ENCODE measurements at regions of chr2 and their contacts with region 1.

Region 1: DNA sequence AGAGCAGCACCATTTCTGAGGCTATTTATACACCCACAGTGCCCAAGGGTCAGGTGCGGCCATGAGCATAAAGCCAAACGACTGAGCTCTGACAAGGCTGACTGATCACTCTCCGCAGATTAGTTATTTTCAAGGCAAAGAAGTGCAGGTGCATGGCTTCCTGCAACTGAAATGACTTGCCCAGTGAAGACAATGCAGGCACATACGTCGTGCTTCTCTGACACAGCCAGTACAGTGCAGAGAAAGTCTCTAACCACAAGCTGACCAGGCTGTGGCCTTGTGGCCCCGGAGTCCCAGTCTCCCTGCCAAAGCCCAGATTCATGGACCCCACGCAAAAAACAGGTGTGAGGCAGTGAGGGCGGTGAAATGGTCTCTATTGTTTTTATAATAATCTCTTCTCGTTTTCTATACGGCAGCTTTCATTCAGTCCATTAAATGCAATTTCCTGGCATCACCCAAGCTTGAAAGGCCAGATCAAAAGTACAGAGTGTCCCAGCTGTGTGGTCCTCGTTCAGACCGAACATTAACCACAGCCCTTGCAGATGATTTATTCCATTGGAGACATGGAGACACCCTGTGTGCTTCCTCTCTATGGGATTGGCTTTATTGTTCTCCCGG is 447.0 kb upstream of the ID2 start:
- DNase-seq: peak; percentile 90
- ATAC-seq: peak; percentile 88
- H3K4me3 ChIP-seq: peak overlapping the region; percentile 26; the same call in 1 of the 2 replicates
- H3K27ac ChIP-seq: peak overlapping the region; percentile 41
- H3K4me1 ChIP-seq: peaks cover 39% of the 10 kb centered on the region
- H3K27me3 ChIP-seq: no peaks in the 10 kb centered on the region
- CTCF ChIP-seq: no peak
- EP300 ChIP-seq: peak; percentile 78 to 84
- POLR2A ChIP-seq: no peak
- RAD21 ChIP-seq: no peak

Region 2: GRCh38 chr2:8004250-8004681 is 230.6 kb before region 1 on chr2:
- CTCF ChIA-PET with region 1: interaction called, 5 read pairs
- POLR2A ChIA-PET with region 1: no interaction called
- RAD21 ChIA-PET with region 1: no interaction called
- SMC1A ChIA-PET with region 1: interaction called, 3 read pairs
- in situ Hi-C with region 1: no loop called
- intact Hi-C with region 1: loop called (anchors 2 kb)
- DNase-seq: no peak
- ATAC-seq: peak; percentile 46
- H3K4me3 ChIP-seq: no peak overlapping the region
- H3K27ac ChIP-seq: no peak overlapping the region
- H3K4me1 ChIP-seq: peaks cover 4% of the 10 kb centered on the region; the same call in 1 of the 2 replicates
- H3K27me3 ChIP-seq: no peaks in the 10 kb centered on the region
- CTCF ChIP-seq: no peak
- EP300 ChIP-seq: peak; percentile 69 to 79; a peak in 2 of 4 replicates
- POLR2A ChIP-seq: no peak
- RAD21 ChIP-seq: no peak

Region 3: GRCh38 chr2:8219631-8220355 is 15.1 kb before region 1 on chr2:
- CTCF ChIA-PET with region 1: interaction called, 5 read pairs
- POLR2A ChIA-PET with region 1: interaction called, 3 read pairs
- RAD21 ChIA-PET with region 1: interaction called, 7 read pairs
- SMC1A ChIA-PET with region 1: interaction called, 15 read pairs
- in situ Hi-C with region 1: no loop called
- intact Hi-C with region 1: no loop called
- DNase-seq: no peak
- ATAC-seq: no peak
- H3K4me3 ChIP-seq: no peak overlapping the region
- H3K27ac ChIP-seq: no peak overlapping the region
- H3K4me1 ChIP-seq: no peaks in the 10 kb centered on the region; the same call in 1 of the 2 replicates
- H3K27me3 ChIP-seq: no peaks in the 10 kb centered on the region
- CTCF ChIP-seq: no peak
- EP300 ChIP-seq: no peak
- POLR2A ChIP-seq: no peak
- RAD21 ChIP-seq: no peak

Region 4: DNA sequence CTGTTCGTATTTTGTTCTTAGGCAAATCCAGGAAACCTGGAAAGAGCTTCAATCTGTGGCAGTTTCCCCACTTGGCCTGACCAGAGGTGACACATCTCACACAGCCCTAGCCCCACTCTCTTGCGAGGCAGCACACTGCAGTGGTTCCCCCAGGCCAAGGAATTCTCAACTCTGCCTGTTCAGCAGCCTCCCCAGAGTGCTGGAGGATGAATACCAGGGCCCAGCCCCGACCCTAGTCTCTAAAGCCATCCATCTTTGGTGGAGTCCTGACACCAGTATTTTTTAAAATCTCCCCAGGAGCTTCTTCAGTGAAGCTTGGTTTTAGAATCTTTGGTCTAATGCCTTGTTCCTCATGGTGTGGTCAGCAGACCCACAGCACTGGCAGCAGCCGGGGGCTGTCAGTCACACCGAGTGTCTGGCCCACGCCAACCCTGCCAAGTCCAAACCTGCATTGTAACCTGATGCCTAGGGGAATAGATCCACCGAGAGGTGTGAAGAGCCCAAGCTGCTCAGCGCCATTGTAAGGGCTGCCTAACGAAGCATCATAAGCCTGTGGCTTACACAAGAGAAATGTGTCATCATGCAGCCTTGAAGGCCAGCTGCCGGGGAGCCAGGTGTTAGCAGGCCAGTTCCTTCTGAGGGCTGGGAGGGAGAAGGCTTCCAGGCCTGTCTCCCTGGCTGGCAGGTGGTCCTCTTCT is 18.3 kb after region 1 on chr2:
- CTCF ChIA-PET with region 1: interaction called, 14 read pairs
- POLR2A ChIA-PET with region 1: interaction called, 10 read pairs
- RAD21 ChIA-PET with region 1: interaction called, 23 read pairs
- SMC1A ChIA-PET with region 1: interaction called, 125 read pairs
- in situ Hi-C with region 1: no loop called
- intact Hi-C with region 1: no loop called
- DNase-seq: peak; percentile 48
- ATAC-seq: peak; percentile 98
- H3K4me3 ChIP-seq: no peak overlapping the region
- H3K27ac ChIP-seq: no peak overlapping the region
- H3K4me1 ChIP-seq: peaks cover 20% of the 10 kb centered on the region
- H3K27me3 ChIP-seq: no peaks in the 10 kb centered on the region
- CTCF ChIP-seq: no peak
- EP300 ChIP-seq: peak; percentile 38 to 47; a peak in 1 of 4 replicates
- POLR2A ChIP-seq: no peak
- RAD21 ChIP-seq: no peak